Right ventricle myocardium inferior (tissue), 1 donor: ENCODE measurements at regions of chrX and their contacts with region 1.

Region 1: DNA sequence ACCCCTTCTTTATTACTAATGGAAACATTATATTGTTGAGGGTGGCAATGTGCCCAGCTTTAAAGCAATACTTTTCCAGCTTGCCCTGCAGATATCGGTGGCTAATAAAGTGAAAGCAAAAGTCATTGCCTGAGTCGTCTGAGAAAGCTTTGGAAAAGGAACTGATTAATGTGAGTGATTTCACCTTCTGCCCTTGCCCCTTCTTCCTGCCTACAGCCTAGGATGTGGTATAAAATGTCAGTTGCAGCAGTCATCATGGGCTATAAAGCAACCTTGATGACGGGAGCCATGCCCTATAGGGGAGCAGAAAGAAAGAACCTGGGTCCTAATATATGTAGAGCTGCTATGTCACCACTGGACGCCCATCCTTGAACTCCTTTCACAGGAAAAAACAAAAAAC is 132.4 kb upstream of the USP9X start:
- DNase-seq: no peak
- ATAC-seq: no peak

Region 2: DNA sequence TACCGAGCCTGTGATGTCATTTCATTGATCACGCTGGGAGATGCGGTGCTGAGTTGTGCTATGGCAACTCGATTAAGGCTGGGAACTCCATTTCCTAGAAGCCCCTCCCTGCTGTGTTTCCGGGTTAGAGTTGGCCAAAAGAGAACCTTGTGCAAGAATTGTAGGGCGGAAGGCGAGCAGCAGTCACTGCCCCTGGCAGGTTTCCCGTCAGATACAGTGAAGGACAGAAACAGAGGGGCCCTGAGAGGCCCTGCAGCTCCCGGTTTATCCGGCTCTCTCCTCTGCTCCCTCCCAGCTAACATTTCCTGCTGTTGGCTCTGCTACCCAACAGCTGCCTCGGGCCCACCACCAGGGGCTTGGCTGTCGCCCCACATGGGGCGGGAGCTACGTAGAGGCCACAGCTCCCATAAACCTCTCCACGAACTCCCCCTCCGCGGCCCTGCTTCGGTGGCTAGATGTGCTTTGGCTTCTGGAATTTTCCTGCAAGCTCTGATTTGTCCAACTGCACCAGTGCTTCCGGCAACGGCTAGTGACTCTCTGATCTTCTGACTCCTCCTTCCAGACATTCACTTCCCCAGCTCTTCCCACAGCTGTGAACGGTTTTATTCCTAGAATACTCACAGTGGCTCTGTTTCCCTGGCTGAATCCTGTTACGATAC is 57.5 kb after region 1 on chrX:
- intact Hi-C with region 1: loop called (anchors 10 kb)
- DNase-seq: peak; percentile 86
- ATAC-seq: peak; percentile 97